ENCODE measurements at regions of chr9 and their contacts with region 1.

Region 1: GRCh38 chr9:129610473-129611301 is 10.2 kb downstream of the C9orf50 start:
- DNase-seq: peak; percentile 45 to 60
- ATAC-seq: peak; percentile 72 to 80
- H3K4me3 ChIP-seq: peak overlapping the region; percentile 60 to 95 (median 72)
- H3K27ac ChIP-seq: peak overlapping the region; percentile 77 to 86 (median 82)
- H3K4me1 ChIP-seq: peaks cover 13 to 22% of the 10 kb centered on the region in 2 donors
- H3K27me3 ChIP-seq: no peaks in the 10 kb centered on the region
- CTCF ChIP-seq: peak; percentile 65 to 100 (median 99)
- POLR2A ChIP-seq: no peak

Region 2: GRCh38 chr9:129258124-129258822 is 352.4 kb before region 1 on chr9:
- in situ Hi-C with region 1: no loop called
- intact Hi-C with region 1: loop called (anchors 5 kb)
- DNase-seq: peak; percentile 66 to 79
- ATAC-seq: peak; percentile 71 to 74
- H3K4me3 ChIP-seq: peak overlapping the region; percentile 1 to 46 (median 32)
- H3K27ac ChIP-seq: peak overlapping the region; percentile 34 to 71 (median 64)
- H3K4me1 ChIP-seq: peaks cover 17 to 23% of the 10 kb centered on the region in 2 donors
- H3K27me3 ChIP-seq: peaks cover 8 to 23% (median 16%) of the 10 kb centered on the region in 3 donors
- CTCF ChIP-seq: no peak
- POLR2A ChIP-seq: no peak

Region 3: GRCh38 chr9:129307227-129307970 is 303.3 kb before region 1 on chr9:
- in situ Hi-C with region 1: no loop called
- intact Hi-C with region 1: no loop called
- DNase-seq: no peak
- ATAC-seq: no peak
- H3K4me3 ChIP-seq: no peak overlapping the region
- H3K27ac ChIP-seq: no peak overlapping the region
- H3K4me1 ChIP-seq: no peaks in the 10 kb centered on the region
- H3K27me3 ChIP-seq: no peaks in the 10 kb centered on the region
- CTCF ChIP-seq: no peak
- POLR2A ChIP-seq: no peak

Region 4: DNA sequence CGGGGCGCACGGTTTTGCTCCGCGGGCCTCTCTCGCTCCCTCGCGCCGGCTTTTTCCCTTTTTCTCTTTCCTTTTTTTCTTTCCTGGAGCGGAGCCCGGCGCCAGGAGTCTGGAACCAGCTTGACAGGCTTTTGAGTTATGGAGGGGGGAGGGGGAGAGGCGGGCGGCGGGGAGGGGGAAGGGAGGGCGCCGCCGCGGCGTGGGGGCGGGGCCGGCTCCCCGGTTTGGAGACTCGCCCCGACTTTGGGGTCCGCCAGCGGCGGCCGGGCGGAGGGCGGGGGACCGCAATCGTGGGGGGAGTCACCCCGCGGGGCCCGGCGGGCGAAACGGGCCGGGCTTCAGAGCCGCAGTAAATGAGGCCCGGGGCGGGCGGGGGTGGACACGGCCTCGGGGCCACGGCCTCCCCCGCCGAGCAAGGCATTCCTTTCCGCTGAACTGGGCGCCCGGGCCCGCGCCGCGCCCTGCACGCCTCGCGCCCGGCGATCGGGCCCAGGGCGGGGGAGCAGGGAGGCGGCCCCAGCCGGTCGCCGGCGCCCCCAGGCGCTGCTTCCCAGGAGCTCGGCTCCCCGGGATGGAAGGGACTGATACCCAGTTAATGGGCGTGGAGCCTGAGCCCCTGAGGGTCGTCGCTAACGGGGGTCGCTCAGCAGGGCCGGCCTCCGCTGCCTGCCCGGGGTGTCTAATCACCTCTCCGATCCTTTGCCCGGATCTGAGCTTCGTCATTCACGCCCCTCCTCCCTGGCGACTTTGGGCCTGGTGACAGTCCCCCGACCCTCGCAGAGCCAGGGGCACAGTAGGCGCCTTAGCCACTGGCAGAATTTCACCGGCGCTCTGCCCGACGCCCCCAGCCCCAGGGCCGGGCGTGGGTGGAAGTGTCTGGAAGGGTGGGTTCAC is 127.9 kb before region 1 on chr9:
- in situ Hi-C with region 1: loop called in 1 of 4 experiments (anchors 10 kb)
- intact Hi-C with region 1: no loop called
- DNase-seq: peak; percentile 67 to 87
- ATAC-seq: peak; percentile 67 to 70
- H3K4me3 ChIP-seq: peak overlapping the region; percentile 57 to 86 (median 69)
- H3K27ac ChIP-seq: peak overlapping the region; percentile 96 to 99 (median 98)
- H3K4me1 ChIP-seq: peaks cover 29 to 41% of the 10 kb centered on the region in 2 donors
- H3K27me3 ChIP-seq: no peaks in the 10 kb centered on the region
- CTCF ChIP-seq: no peak
- POLR2A ChIP-seq: peak; percentile 19 to 46

Region 5: GRCh38 chr9:129752915-129753729 is 142.4 kb after region 1 on chr9 and contains the start of gene PTGES:
- in situ Hi-C with region 1: no loop called
- intact Hi-C with region 1: no loop called
- DNase-seq: peak; percentile 23 to 30
- ATAC-seq: peak in 1 of 2 donors; percentile 51
- H3K4me3 ChIP-seq: peak within 1 kb of the TSS; percentile 15 to 46 (median 36)
- H3K27ac ChIP-seq: no peak within 1 kb of the TSS
- H3K4me1 ChIP-seq: peaks cover 0 to 6% of the 10 kb centered on the region in 2 donors
- H3K27me3 ChIP-seq: peaks cover 5 to 25% (median 23%) of the 10 kb centered on the region in 3 donors
- CTCF ChIP-seq: no peak
- POLR2A ChIP-seq: peak in 1 of 2 donors; percentile 19
- total RNA-seq, gene PTGES: 0.23 to 1.2 (median 0.51) TPM in 3 of 4 donors, not detected in the other